ENCODE measurements at regions of chr12 and their contacts with region 1.

Region 1: DNA sequence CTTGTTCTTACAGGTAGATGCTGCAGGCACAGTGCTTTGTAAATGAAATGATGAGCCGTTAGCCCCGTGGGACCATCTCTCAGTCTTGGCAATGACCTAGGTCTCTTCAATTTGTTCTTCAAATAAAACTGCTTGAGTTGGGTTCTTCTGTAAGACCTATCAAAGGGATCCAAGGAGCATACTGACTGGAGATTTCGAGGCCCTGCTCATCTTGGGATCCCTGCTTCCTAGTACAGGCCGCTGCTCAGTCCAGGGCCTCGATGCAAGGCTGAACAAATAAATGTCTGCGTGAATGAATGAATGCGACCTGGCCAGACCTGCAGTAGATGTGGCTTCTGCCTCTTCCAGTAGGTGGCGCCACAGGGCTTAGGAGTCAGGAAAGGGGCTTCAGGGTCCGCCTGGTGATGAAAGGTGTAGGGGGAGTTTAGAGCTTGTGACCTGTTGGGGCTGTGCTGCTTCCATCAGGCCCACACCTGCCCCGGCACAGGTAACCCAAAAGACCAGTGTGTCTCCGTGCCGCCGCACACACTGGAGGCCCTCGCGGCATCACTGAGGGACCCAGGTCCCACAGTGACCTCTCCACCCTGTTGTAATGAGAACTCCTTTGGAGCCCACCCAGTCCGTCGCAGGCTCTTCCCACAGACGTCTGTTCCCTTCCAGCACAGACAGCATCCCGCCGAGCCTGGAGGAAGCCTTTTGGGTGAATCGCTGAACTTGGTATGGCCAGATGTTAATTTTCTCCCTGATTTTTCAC is 4.4 kb downstream of the CACNA1C start:
- DNase-seq: peak; percentile 73 to 99
- H3K4me3 ChIP-seq: no peak overlapping the region
- H3K27ac ChIP-seq: no peak overlapping the region
- H3K4me1 ChIP-seq: peaks cover 0 to 15% (median 4%) of the 10 kb centered on the region in 4 experiments; a peak in 5 of 7 replicates
- H3K27me3 ChIP-seq: peaks cover 12 to 36% (median 26%) of the 10 kb centered on the region in 4 experiments
- CTCF ChIP-seq: peak; percentile 96 to 98 (median 97)
- EP300 ChIP-seq: no peak
- POLR2A ChIP-seq: no peak
- RAD21 ChIP-seq: peak; percentile 99

Region 2: GRCh38 chr12:1978078-1978862 is 78.9 kb before region 1 on chr12:
- CTCF ChIA-PET with region 1: no interaction called
- POLR2A ChIA-PET with region 1: no interaction called
- DNase-seq: no peak
- H3K4me3 ChIP-seq: no peak overlapping the region
- H3K27ac ChIP-seq: no peak overlapping the region
- H3K4me1 ChIP-seq: peaks cover 0 to 5% (median 0%) of the 10 kb centered on the region in 4 experiments; a peak in 1 of 7 replicates
- H3K27me3 ChIP-seq: no peaks in the 10 kb centered on the region
- CTCF ChIP-seq: no peak
- EP300 ChIP-seq: no peak
- POLR2A ChIP-seq: no peak
- RAD21 ChIP-seq: no peak

Region 3: DNA sequence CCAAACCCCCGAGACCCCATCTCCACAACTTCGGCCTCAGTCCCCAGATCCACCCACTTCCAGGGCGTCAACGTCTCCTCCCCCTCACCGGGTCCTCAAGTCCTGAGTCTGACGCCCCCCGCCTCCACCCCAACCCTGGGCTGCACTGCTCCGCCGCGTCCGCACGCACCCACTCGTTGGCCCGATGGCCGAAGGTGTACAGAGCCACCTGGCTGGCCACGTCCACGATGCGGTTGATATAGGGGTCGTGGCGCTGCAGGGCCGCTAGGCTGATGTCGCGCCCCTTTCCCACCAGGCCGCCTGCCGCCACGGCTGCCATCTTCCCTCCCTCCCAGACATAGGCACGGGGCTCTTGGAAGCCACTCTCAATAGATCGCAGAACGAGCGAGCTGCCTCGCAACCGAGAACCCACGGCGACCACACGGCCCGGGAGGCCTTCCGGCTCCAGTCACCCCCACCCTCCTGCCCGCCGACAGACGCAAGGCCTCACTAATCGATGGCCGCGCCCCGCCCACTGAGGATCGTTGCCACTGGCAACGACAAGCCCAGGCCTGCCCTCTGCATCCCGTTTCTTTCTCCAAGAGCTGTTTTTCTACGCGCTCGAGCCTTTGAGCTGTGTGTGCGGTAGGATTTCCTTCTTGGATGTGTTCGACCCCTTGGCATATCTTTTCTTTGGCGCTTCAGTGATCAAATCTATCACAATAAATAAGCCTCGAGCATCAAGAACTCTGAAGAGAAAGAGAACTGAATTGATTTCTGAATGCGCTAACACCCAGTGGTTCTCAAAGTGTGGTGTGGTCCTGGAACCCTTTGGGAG is 52.9 kb before region 1 on chr12 and contains the start of gene DCP1B:
- CTCF ChIA-PET with region 1: no interaction called
- POLR2A ChIA-PET with region 1: no interaction called
- DNase-seq: peak; percentile 93 to 96
- H3K4me3 ChIP-seq: peak within 1 kb of the TSS; percentile 87 to 96 (median 90)
- H3K27ac ChIP-seq: peak within 1 kb of the TSS; percentile 90
- H3K4me1 ChIP-seq: peaks cover 0 to 4% (median 2%) of the 10 kb centered on the region in 4 experiments; a peak in 2 of 7 replicates
- H3K27me3 ChIP-seq: no peaks in the 10 kb centered on the region
- CTCF ChIP-seq: no peak
- EP300 ChIP-seq: 0 out of 3 replicates have a peak, but pooled peaks of 1 of the 2 experiments have one; percentile 19
- POLR2A ChIP-seq: peak in 1 of 2 experiments; percentile 80; a peak in 2 of 3 replicates
- RAD21 ChIP-seq: no peak
- total RNA-seq, gene DCP1B: 14.8 and 16.3 TPM in 2 replicates

Region 4: GRCh38 chr12:2044165-2044564 is 13.1 kb before region 1 on chr12:
- CTCF ChIA-PET with region 1: interaction called, 25 read pairs
- POLR2A ChIA-PET with region 1: no interaction called
- DNase-seq: no peak
- H3K4me3 ChIP-seq: no peak overlapping the region
- H3K27ac ChIP-seq: no peak overlapping the region
- H3K4me1 ChIP-seq: peaks cover 0 to 4% (median 0%) of the 10 kb centered on the region in 4 experiments; a peak in 1 of 7 replicates
- H3K27me3 ChIP-seq: no peaks in the 10 kb centered on the region
- CTCF ChIP-seq: no peak
- EP300 ChIP-seq: no peak
- POLR2A ChIP-seq: no peak
- RAD21 ChIP-seq: no peak

Region 5: GRCh38 chr12:2118061-2118460 is 60.8 kb after region 1 on chr12:
- CTCF ChIA-PET with region 1: interaction called, 10 read pairs
- POLR2A ChIA-PET with region 1: no interaction called
- DNase-seq: no peak
- H3K4me3 ChIP-seq: no peak overlapping the region
- H3K27ac ChIP-seq: no peak overlapping the region
- H3K4me1 ChIP-seq: peaks cover 0 to 4% (median 0%) of the 10 kb centered on the region in 4 experiments; a peak in 1 of 7 replicates
- H3K27me3 ChIP-seq: no peaks in the 10 kb centered on the region
- CTCF ChIP-seq: peak; percentile 25 to 49 (median 35); a peak in 3 of 4 replicates
- EP300 ChIP-seq: no peak
- POLR2A ChIP-seq: no peak
- RAD21 ChIP-seq: peak; percentile 30 to 47; a peak in 3 of 4 replicates

Region 6: DNA sequence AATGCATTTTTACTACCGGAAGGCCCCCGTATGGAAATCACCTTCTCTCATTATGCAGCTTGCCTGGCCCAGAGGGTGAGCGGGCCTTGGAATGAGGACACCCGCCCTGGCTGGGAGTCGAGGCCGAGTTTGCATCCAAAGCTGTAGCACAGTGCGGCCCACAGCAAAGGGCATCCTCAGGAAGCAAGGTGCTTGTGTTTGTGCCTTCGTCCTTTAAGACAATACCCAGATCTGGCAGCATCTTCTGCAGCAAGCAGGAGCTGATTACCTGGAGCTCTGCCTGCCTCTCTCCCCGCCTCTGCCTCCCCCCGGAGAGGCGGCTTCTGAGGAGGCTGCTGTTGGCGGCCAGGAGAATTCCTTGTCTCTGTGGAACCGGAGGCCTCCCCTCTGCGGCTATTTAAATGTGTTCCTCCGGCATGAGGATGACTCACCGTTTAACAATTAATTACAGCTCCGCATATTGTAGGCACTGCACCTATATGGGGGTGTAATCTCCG is 140.8 kb after region 1 on chr12:
- CTCF ChIA-PET with region 1: interaction called, 15 read pairs
- POLR2A ChIA-PET with region 1: no interaction called
- DNase-seq: peak; percentile 71 to 72
- H3K4me3 ChIP-seq: peak overlapping the region in 3 of 4 experiments; percentile 3 to 50 (median 7); a peak in 4 of 8 replicates
- H3K27ac ChIP-seq: peak overlapping the region; percentile 9; the same call in 1 of the 2 replicates
- H3K4me1 ChIP-seq: peaks cover 7 to 24% (median 13%) of the 10 kb centered on the region in 4 experiments; a peak in 6 of 7 replicates
- H3K27me3 ChIP-seq: no peaks in the 10 kb centered on the region
- CTCF ChIP-seq: no peak
- EP300 ChIP-seq: 0 out of 3 replicates have a peak, but pooled peaks of 1 of the 2 experiments have one; percentile 29
- POLR2A ChIP-seq: peak in 1 of 2 experiments; percentile 68; a peak in 2 of 3 replicates
- RAD21 ChIP-seq: no peak

Region 7: DNA sequence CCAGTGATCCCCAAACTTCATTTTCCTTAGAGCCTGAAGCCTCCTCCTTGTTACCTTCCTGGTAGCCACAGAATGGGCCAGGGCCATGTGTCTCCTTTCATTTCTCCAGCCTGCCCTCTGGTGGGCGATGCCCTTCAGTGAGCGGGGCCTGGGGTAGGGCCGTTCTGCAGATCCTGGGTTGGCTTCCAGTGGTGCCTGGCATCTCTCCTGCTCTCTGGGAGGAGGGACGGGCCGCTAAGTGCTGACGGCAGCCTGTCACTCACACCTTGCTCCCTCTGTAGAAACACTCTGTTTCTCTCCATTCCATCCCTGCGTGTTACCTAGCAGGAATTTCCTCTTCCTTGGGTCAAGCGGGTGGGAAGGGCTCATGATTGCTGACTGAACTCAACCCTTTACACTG is 227.6 kb after region 1 on chr12:
- CTCF ChIA-PET with region 1: interaction called, 252 read pairs
- POLR2A ChIA-PET with region 1: interaction called, 4 read pairs
- DNase-seq: peak; percentile 64 to 91
- H3K4me3 ChIP-seq: no peak overlapping the region
- H3K27ac ChIP-seq: no peak overlapping the region
- H3K4me1 ChIP-seq: peaks cover 5 to 18% (median 6%) of the 10 kb centered on the region in 4 experiments
- H3K27me3 ChIP-seq: peaks cover 0 to 3% (median 0%) of the 10 kb centered on the region in 4 experiments; a peak in 1 of 7 replicates
- CTCF ChIP-seq: peak; percentile 86 to 95 (median 90)
- EP300 ChIP-seq: no peak
- POLR2A ChIP-seq: no peak
- RAD21 ChIP-seq: peak; percentile 82 to 87

Region 8: DNA sequence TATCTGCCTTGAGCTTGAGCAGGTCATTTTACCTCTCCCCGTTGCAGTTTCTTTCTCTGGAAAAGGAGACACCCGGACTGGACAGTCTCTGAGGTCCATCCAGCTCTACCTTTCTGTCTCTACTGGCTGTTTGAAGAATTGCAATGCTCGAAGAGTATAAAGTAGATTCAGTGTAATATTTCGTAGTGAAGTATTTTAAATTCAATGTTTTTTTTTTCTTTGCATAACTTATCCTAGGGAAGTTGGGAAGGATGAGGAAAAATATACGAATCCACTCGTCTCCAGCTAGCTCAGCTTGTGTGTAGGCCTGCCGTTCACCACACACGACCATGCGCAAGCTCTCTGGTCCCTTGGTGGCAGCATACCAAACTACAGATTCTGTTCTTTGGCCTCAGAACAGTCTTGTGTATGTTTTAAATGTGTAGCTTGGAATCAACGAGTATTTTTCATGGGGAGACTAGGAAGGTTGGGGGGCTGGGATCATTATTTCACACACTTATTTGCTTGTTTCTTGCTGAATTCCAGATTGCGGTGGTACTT is 303.5 kb after region 1 on chr12:
- CTCF ChIA-PET with region 1: interaction called, 14 read pairs
- POLR2A ChIA-PET with region 1: no interaction called
- DNase-seq: no peak
- H3K4me3 ChIP-seq: no peak overlapping the region
- H3K27ac ChIP-seq: no peak overlapping the region
- H3K4me1 ChIP-seq: no peaks in the 10 kb centered on the region
- H3K27me3 ChIP-seq: no peaks in the 10 kb centered on the region
- CTCF ChIP-seq: peak in 2 of 3 experiments; percentile 10 to 22; a peak in 3 of 4 replicates
- EP300 ChIP-seq: no peak
- POLR2A ChIP-seq: no peak
- RAD21 ChIP-seq: no peak

Measured in H1 (cell line).